ENCODE measurements at regions of chr11 and their contacts with region 1.

Region 1: GRCh38 chr11:355581-356458 is 13.5 kb upstream of the B4GALNT4 start:
- DNase-seq: peak; percentile 91
- ATAC-seq: peak; percentile 72
- H3K4me3 Mint-ChIP-seq: peak overlapping the region; percentile 83
- H3K27ac Mint-ChIP-seq: peak overlapping the region; percentile 96
- H3K4me1 Mint-ChIP-seq: peaks cover 42% of the 10 kb centered on the region
- H3K27me3 Mint-ChIP-seq: no peaks in the 10 kb centered on the region
- CTCF ChIP-seq: no peak

Region 2: DNA sequence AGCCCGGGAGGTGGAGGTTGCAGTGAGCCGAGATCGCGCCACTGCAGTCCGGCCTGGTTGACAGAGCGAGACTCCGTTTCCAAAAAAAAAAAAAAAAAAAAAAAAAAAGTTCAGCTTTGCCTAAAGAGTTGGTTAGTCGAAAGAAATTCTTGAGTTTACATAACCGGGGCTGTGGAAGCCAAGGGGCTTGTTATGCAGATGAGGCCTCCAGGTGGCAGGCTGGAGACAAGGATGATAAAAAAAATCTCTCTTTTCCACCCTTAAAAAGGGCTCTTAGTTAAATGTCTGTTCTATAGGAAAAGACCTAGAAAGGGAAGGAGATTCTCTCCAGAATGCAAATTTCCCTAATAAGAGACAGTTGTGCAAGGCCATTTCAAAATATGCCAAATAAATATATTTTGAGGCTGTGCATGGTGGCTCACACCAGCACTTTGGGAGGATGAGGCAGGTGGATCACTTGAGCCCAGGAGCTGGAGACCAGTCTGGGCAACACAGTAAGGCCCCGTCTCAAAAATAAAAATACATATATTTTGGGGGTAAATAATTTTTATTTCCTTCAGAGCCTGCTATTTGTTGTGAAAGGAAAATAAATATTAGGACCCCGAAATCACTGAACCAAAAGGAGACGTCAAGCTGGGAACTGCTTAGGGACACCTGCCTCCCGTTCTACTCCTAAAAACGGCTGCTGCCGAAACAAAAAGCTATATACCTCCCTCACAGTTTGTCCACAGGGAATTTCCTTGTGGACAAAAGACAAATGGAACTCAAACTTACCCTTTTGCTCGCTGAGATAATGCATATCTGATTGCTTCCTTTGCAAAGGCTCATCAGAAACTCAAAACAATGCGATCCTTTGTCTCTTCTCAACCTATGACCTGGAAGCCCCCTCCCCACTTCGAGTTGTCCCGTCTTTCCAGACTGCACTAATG is 50.6 kb before region 1 on chr11:
- CTCF ChIA-PET with region 1: interaction called, 10 read pairs
- POLR2A ChIA-PET with region 1: interaction called, 6 read pairs
- intact Hi-C with region 1: no loop called
- DNase-seq: peak; percentile 85
- ATAC-seq: peak; percentile 25
- H3K4me3 Mint-ChIP-seq: no peak overlapping the region
- H3K27ac Mint-ChIP-seq: no peak overlapping the region
- H3K4me1 Mint-ChIP-seq: peaks cover 49% of the 10 kb centered on the region
- H3K27me3 Mint-ChIP-seq: peaks cover 5% of the 10 kb centered on the region
- CTCF ChIP-seq: peak; percentile 86

Region 3: DNA sequence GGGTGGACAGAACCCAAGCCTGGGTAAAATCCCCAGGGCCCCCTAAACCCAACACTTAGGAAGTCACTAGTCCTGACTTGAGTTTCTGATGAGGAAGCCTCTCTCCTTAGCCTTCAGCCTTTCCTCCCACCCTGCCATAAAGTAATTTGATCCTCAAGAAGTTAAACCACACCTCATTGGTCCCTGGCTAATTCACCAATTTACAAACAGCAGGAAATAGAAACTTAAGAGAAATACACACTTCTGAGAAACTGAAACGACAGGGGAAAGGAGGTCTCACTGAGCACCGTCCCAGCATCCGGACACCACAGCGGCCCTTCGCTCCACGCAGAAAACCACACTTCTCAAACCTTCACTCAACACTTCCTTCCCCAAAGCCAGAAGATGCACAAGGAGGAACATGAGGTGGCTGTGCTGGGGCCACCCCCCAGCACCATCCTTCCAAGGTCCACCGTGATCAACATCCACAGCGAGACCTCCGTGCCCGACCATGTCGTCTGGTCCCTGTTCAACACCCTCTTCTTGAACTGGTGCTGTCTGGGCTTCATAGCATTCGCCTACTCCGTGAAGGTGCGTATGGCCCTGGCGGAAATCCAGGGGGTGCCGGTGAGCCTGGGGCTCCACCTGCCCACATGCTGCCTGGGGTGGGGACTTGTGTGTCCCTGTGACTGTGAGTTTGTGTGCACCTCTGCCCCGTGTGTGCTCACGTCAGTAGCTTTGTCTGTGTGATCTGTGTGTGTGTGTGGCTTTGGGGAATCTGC is 41.9 kb before region 1 on chr11 and contains the start of gene IFITM1:
- CTCF ChIA-PET with region 1: interaction called, 26 read pairs
- POLR2A ChIA-PET with region 1: interaction called, 47 read pairs
- intact Hi-C with region 1: no loop called
- DNase-seq: peak; percentile 79
- ATAC-seq: peak; percentile 45
- H3K4me3 Mint-ChIP-seq: peak within 1 kb of the TSS; percentile 83
- H3K27ac Mint-ChIP-seq: peak within 1 kb of the TSS; percentile 91
- H3K4me1 Mint-ChIP-seq: peaks cover 34% of the 10 kb centered on the region
- H3K27me3 Mint-ChIP-seq: no peaks in the 10 kb centered on the region
- CTCF ChIP-seq: no peak
- total RNA-seq, gene IFITM1: 296 to 304 TPM

Region 4: DNA sequence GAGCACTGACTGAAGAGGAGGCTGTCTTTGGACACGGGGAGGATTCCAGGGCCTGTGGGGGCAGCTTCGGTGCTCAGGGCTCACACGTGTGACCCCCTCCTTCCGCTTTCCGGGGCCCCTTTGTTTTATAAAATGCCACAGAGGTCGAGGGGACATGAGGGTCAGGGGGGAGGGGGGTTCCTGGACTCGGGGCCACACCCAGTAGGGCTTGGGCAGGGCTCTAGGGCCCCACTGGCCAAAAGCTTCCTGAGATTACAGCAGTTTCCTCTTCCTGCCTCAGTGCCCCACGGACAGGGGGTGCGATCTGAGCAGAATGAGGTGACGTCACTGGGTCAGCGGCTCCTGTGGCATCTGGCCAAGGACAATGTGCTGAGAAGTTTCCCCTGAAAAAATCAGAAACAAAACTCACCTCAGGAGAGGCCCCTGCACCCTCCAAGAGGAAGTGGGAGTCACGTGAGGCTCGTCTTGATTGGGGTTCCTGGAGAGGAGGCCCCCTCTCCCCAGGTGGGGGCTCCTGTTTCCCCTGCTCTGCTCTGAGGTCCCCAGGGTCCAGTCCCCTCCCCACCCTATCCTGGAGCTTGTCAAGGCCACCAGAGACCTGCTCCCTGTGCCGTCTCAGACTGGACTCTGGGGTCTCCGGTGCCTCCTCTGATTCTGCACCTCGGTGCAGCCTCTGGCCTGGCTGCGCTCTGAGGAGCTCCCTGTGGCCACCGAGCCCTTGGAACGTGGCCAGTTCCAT is 28.8 kb before region 1 on chr11:
- CTCF ChIA-PET with region 1: interaction called, 15 read pairs
- POLR2A ChIA-PET with region 1: interaction called, 30 read pairs
- intact Hi-C with region 1: no loop called
- DNase-seq: peak; percentile 94
- ATAC-seq: peak; percentile 62
- H3K4me3 Mint-ChIP-seq: peak overlapping the region; percentile 72
- H3K27ac Mint-ChIP-seq: peak overlapping the region; percentile 99
- H3K4me1 Mint-ChIP-seq: peaks cover 73% of the 10 kb centered on the region
- H3K27me3 Mint-ChIP-seq: no peaks in the 10 kb centered on the region
- CTCF ChIP-seq: no peak

Region 5: GRCh38 chr11:342328-342727 is 13.5 kb before region 1 on chr11:
- CTCF ChIA-PET with region 1: interaction called, 18 read pairs
- POLR2A ChIA-PET with region 1: interaction called, 7 read pairs
- intact Hi-C with region 1: no loop called
- DNase-seq: no peak
- ATAC-seq: no peak
- H3K4me3 Mint-ChIP-seq: no peak overlapping the region
- H3K27ac Mint-ChIP-seq: no peak overlapping the region
- H3K4me1 Mint-ChIP-seq: peaks cover 16% of the 10 kb centered on the region
- H3K27me3 Mint-ChIP-seq: no peaks in the 10 kb centered on the region
- CTCF ChIP-seq: no peak

Measured in activated CD8-positive, alpha-beta T cell treated with anti-CD3 and anti-CD28 coated beads for 36 hours (primary cell).